Activated CD4-positive, alpha-beta T cell treated with anti-CD3 and anti-CD28 coated beads for 36 hours (primary cell): ENCODE measurements at regions of chr15 and their contacts with region 1.

Region 1: DNA sequence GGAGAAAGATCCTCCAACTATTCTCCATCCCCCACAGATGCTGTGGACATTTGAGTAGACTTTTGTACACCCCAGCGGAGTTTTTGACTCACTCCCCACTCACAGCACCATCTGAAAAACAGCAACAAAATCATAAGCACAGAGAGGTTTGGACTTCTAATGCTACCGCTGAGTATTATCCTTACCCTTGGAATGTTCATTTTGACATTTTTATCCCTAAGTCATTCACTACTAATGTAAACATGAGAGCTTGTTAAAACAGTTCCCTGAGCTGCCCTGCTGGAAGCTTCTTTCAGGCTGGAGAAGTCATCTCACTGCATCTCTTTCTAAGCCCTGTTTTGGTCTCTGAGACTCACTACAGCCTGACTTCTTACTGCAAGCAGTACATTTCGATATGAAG is 1045.9 kb downstream of the MCTP2 start:
- DNase-seq: no peak
- ATAC-seq: no peak
- H3K4me3 Mint-ChIP-seq: no peak overlapping the region
- H3K27ac Mint-ChIP-seq: no peak overlapping the region
- H3K4me1 Mint-ChIP-seq: no peaks in the 10 kb centered on the region
- H3K27me3 Mint-ChIP-seq: peaks cover 14% of the 10 kb centered on the region

Region 2: DNA sequence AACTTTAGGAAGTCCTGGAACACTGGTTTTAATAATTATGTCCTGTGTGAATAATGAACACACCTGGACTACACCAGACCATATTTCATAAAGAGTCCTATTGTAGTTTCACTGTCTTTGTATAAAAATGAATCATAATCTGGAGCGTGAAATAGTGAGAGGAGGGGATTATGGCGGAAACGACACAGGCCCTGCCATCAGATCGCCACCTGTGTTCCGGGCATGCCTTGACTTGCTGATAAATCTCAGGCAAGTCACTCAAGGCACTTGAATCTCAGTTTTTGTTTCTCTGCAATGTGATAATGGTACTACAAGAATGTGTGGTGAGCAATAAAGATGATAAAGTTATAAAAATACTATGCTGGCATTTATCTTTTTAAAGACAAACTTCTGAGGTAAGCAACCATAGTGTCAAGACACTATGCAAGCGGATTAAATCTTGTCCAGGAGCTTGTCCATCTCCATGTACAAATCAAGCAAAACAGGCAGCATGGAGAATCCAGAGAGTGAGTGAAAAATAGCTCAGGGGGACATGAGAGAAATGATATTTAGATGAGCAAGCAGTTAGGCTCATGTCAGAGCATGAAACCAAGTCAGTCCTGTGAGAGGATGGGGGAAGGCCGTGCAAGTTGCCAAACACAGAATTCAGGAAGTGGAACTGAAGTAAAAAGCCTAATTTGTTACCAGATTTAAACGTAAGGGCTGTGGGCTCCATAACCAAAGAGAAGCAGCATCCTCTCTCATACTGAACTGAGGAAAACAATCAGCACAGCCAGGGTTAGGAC is 50.2 kb before region 1 on chr15:
- CTCF ChIA-PET with region 1: no interaction called
- POLR2A ChIA-PET with region 1: no interaction called
- intact Hi-C with region 1: loop called in 1 of 2 experiments (anchors 10 kb)
- DNase-seq: no peak
- ATAC-seq: no peak
- H3K4me3 Mint-ChIP-seq: no peak overlapping the region
- H3K27ac Mint-ChIP-seq: no peak overlapping the region
- H3K4me1 Mint-ChIP-seq: no peaks in the 10 kb centered on the region
- H3K27me3 Mint-ChIP-seq: peaks cover 6% of the 10 kb centered on the region